ENCODE measurements at regions of chr15 and their contacts with region 1.

Region 1: DNA sequence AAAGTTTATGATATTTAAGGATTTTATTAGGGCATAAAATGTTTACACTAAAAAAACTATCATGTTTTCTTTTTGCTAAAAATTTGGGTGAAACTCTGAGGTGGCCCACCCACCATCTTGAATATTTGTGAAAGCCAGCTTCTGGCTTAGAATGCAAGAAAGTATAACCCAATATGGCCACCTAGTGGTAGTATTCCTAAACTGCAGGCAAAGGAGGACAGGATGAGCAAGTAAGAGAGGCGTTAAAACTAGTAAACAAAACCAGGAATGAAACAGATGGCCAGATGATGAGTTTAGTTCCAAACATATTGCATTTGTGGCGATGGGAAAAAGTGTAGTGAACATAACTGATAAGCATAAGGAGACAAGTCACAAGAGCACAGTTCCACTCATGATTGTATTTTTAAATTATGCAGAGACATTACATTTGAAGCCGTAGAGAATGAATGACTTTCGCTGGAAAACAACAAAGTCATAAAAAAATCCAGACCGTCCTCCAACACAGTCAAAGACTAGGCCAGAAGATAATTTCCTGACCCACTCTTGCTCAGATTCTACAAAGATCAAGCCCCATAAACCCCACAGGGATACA is 103.3 kb upstream of the PRTG start:
- DNase-seq: peak; percentile 65
- H3K4me3 ChIP-seq: no peak overlapping the region; a peak in 1 of 4 replicates
- H3K27ac ChIP-seq: peak overlapping the region in 1 of 2 experiments; percentile 29; a peak in 1 of 4 replicates
- H3K4me1 ChIP-seq: peaks cover 0 to 6% of the 10 kb centered on the region in 2 experiments; a peak in 2 of 4 replicates
- H3K27me3 ChIP-seq: no peaks in the 10 kb centered on the region
- CTCF ChIP-seq: peak; percentile 96
- EP300 ChIP-seq: no peak
- RAD21 ChIP-seq: peak; percentile 89

Region 2: GRCh38 chr15:55394694-55395093 is 451.5 kb before region 1 on chr15:
- CTCF ChIA-PET with region 1: no interaction called
- POLR2A ChIA-PET with region 1: no interaction called
- DNase-seq: no peak
- H3K4me3 ChIP-seq: no peak overlapping the region
- H3K27ac ChIP-seq: no peak overlapping the region
- H3K4me1 ChIP-seq: no peaks in the 10 kb centered on the region
- H3K27me3 ChIP-seq: no peaks in the 10 kb centered on the region
- CTCF ChIP-seq: no peak
- EP300 ChIP-seq: no peak
- RAD21 ChIP-seq: no peak

Region 3: DNA sequence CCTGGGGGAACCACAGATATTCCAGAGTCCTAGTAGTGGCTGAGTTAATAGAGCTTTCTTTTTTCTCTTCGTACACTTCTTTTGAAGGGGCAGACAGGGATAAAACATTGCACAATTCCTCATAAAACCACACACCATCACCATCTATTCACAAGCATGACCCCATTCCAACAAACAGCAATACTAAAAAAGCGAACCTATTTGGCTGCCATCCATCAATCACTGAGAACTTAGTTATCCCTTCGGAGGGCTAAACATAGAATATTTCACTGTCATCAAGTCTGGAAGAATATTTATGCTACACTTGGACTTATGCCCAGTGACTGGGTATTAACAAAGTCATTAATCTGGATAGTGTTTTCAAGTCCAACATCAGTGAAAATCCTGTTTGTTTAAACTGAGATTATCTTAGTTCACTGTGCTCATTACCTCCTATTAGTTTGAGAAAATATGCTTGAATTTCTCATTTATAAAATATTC is 23.0 kb before region 1 on chr15:
- CTCF ChIA-PET with region 1: interaction called, 11 read pairs
- POLR2A ChIA-PET with region 1: interaction called, 3 read pairs
- DNase-seq: no peak
- H3K4me3 ChIP-seq: no peak overlapping the region
- H3K27ac ChIP-seq: peak overlapping the region; percentile 28 to 62; a peak in 3 of 4 replicates
- H3K4me1 ChIP-seq: peaks cover 14 to 23% of the 10 kb centered on the region in 2 experiments
- H3K27me3 ChIP-seq: no peaks in the 10 kb centered on the region
- CTCF ChIP-seq: no peak
- EP300 ChIP-seq: peak in 1 of 2 experiments; percentile 54; a peak in 1 of 4 replicates
- RAD21 ChIP-seq: no peak

Region 4: DNA sequence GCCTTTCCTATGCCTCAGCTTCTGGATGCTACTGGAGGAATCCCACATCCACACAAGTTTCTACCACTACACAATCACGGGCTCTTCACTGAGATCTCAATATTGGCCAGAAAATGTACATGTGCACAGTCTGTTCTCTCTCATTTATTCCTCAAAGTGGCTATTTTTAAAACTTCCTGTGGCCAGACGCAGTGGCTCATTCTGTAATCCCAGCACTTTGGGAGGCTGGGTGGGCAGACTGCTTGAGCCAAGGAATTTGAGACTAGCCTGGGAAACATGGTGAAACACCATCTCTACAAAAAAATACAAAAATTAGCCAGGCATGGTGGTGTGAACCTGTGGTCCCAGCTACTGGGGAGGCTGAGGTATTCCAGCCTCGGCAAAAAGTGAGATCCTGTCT is 11.9 kb before region 1 on chr15:
- CTCF ChIA-PET with region 1: interaction called, 12 read pairs
- POLR2A ChIA-PET with region 1: no interaction called
- DNase-seq: no peak
- H3K4me3 ChIP-seq: no peak overlapping the region
- H3K27ac ChIP-seq: peak overlapping the region in 1 of 2 experiments; percentile 41; a peak in 1 of 4 replicates
- H3K4me1 ChIP-seq: no peaks in the 10 kb centered on the region; a peak in 1 of 4 replicates
- H3K27me3 ChIP-seq: no peaks in the 10 kb centered on the region
- CTCF ChIP-seq: no peak
- EP300 ChIP-seq: no peak
- RAD21 ChIP-seq: no peak